A673 (cell line): ENCODE measurements at regions of chr6 and their contacts with region 1.

Region 1: DNA sequence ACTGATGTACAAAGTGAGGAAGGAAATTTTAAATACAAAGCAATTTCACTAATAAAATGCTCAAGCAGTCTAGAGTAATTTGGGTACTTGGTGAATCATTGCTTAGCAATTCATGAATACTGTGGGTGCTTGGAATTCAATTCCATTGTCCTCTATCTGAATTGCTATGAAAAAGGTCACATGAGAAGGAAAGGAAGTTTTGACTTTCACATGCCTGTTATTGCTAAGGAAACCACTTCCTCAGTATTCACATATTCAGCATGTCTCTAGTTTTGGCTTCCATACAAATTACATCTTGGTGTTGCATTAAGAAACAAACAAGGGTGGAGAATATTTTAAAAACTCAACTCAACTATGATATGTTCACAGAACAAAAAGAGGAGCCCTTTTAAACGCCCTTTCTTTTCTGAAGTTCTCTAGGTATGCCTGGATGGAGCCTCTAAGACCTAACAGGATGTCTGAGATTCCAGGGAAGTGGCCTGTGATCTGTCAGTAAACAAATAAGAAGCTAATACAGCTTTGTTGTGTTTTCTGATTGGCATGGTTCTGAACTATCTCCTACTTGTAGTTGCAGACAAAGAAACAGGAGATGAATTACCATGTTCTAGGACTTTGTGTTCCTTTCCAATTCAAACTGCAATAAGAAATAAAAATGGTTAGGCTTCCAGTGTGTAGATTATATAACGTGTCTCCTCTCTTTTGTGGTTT is 190.4 kb downstream of the OGFRL1 start:
- DNase-seq: peak; percentile 90
- H3K4me3 ChIP-seq: no peak overlapping the region
- H3K27ac ChIP-seq: peak overlapping the region; percentile 41
- H3K4me1 ChIP-seq: peaks cover 25% of the 10 kb centered on the region
- H3K27me3 ChIP-seq: no peaks in the 10 kb centered on the region
- CTCF ChIP-seq: no peak

Region 2: DNA sequence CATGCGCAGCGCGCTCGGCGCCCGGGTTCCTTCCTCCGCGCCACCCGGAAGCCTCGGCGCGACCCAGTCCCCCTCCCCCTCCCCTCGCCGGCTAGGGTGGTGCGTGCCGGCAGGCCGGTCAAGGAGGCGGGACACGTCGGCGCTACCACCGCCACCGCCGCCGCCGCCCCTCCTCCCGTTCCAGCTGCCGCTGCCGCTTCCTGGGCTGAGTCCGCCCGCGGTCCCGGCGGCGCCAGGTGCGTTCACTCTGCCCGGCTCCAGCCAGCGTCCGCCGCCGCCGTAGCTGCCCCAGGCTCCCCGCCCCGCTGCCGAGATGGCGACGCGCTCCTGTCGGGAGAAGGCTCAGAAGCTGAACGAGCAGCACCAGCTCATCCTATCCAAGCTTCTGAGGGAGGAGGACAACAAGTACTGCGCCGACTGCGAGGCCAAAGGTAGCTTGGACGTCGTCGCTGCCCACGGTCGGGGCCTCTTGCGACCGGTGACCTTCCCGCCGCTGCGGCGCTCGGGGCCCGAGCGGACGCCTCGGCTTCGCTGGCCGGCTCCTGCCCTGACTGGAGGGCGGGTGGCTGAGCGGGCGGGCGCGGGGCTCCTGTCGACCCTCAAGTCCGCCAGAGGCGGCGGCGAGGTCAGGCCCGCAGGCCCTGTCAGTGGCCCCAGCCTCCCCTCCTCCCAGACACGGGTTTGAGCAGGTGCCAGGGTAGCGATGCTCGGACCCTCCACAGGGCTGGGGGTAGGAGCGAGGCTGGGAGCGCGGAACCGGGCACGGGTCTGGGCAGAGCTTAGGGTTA is 811.1 kb before region 1 on chr6 and contains the start of gene SMAP1:
- CTCF ChIA-PET with region 1: no interaction called
- POLR2A ChIA-PET with region 1: no interaction called
- intact Hi-C with region 1: loop called (anchors 5 kb)
- DNase-seq: peak; percentile 93
- H3K4me3 ChIP-seq: peak within 1 kb of the TSS; percentile 88
- H3K27ac ChIP-seq: peak within 1 kb of the TSS; percentile 59
- H3K4me1 ChIP-seq: no peaks in the 10 kb centered on the region
- H3K27me3 ChIP-seq: no peaks in the 10 kb centered on the region
- CTCF ChIP-seq: no peak
- total RNA-seq, gene SMAP1: 23.2 and 23.7 TPM in 2 replicates

Region 3: DNA sequence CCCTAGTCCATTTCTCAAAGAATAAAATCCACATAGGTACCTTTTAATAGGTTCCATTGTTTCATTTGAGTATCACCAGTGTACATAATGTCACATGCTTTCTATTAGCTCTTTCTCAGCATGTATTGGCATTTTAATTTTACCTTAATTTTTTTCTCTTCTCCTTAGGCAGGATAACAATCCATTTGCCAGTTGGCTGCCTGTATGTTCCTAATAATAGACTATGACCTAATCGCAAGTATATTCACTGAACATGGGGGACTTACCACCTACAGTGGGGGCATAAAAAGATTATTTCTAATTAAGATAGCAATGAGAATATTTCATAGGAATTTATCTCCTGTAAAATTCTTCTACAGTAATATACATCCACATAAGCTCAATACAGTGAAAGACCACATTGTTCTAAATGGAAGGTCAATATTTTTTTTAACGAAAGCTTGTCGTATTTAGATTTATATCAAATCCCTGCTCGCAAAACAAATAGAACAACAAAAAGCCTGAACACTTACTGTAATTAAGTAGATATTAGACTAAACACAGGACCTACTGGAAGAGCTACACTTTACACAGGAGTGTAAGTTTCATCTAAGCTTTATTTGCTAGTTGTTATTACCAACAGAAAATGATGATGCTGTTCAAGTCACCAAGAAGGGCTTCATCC is 114.0 kb before region 1 on chr6:
- CTCF ChIA-PET with region 1: no interaction called
- POLR2A ChIA-PET with region 1: no interaction called
- intact Hi-C with region 1: no loop called
- DNase-seq: no peak
- H3K4me3 ChIP-seq: no peak overlapping the region
- H3K27ac ChIP-seq: no peak overlapping the region
- H3K4me1 ChIP-seq: no peaks in the 10 kb centered on the region
- H3K27me3 ChIP-seq: no peaks in the 10 kb centered on the region
- CTCF ChIP-seq: no peak

Region 4: GRCh38 chr6:71444222-71444621 is 34.8 kb before region 1 on chr6:
- CTCF ChIA-PET with region 1: no interaction called
- POLR2A ChIA-PET with region 1: no interaction called
- intact Hi-C with region 1: no loop called
- DNase-seq: peak; percentile 20
- H3K4me3 ChIP-seq: no peak overlapping the region
- H3K27ac ChIP-seq: no peak overlapping the region
- H3K4me1 ChIP-seq: no peaks in the 10 kb centered on the region
- H3K27me3 ChIP-seq: no peaks in the 10 kb centered on the region
- CTCF ChIP-seq: peak; percentile 33; the same call in 1 of the 2 replicates

Region 5: DNA sequence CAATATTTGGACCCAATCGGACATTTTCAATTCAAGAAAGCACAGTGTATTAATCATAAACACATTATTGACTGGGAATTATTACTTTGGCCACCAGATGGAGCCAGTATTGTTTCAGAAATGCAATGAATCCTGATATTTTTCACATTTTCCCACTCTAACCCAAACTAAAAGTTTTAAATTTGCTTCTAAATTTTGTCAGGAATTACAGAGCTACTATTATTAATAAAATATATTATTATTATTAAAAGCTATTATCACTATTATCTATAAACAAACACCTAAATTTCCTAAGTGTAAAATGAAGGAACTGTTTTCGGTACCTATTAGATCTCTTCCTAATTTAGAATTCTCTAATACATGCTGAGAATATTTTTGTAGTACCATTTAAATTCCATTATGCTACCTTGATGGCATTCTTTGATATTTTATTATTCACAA is 55.0 kb after region 1 on chr6:
- CTCF ChIA-PET with region 1: no interaction called
- POLR2A ChIA-PET with region 1: no interaction called
- intact Hi-C with region 1: no loop called
- DNase-seq: peak; percentile 24
- H3K4me3 ChIP-seq: no peak overlapping the region
- H3K27ac ChIP-seq: no peak overlapping the region
- H3K4me1 ChIP-seq: no peaks in the 10 kb centered on the region
- H3K27me3 ChIP-seq: no peaks in the 10 kb centered on the region
- CTCF ChIP-seq: peak; percentile 69